Sigmoid colon (tissue), 7 donors: ENCODE measurements at regions of chr1 and their contacts with region 1.

Region 1: GRCh38 chr1:53945433-53946251 is at the start of gene IFT25:
- DNase-seq: peak; percentile 98
- H3K4me3 ChIP-seq: peak within 1 kb of the TSS; percentile 68 to 93 (median 82)
- H3K27ac ChIP-seq: peak within 1 kb of the TSS; percentile 92 to 96 (median 94)
- H3K4me1 ChIP-seq: peaks cover 0 to 43% (median 33%) of the 10 kb centered on the region in 4 donors
- H3K27me3 ChIP-seq: no peaks in the 10 kb centered on the region
- CTCF ChIP-seq: no peak
- EP300 ChIP-seq: no peak
- POLR2A ChIP-seq: peak; percentile 38 to 57
- total RNA-seq, gene IFT25: 16.1 to 33.9 (median 24.9) TPM

Region 2: GRCh38 chr1:53837924-53838652 is 107.6 kb before region 1 on chr1 and contains the start of gene NDC1:
- intact Hi-C with region 1: loop called (anchors 5 kb)
- DNase-seq: peak; percentile 93
- H3K4me3 ChIP-seq: peak within 1 kb of the TSS; percentile 80 to 93 (median 88)
- H3K27ac ChIP-seq: peak within 1 kb of the TSS; percentile 91 to 96 (median 93)
- H3K4me1 ChIP-seq: peaks cover 0 to 18% (median 11%) of the 10 kb centered on the region in 4 donors
- H3K27me3 ChIP-seq: no peaks in the 10 kb centered on the region
- CTCF ChIP-seq: no peak
- EP300 ChIP-seq: peak in 1 of 4 donors; percentile 19
- POLR2A ChIP-seq: no peak
- total RNA-seq, gene NDC1: 7.6 to 11.4 (median 10.2) TPM

Region 3: GRCh38 chr1:53889304-53890298 is 56.0 kb before region 1 on chr1 and contains the start of gene YIPF1:
- intact Hi-C with region 1: loop called (anchors 2 kb)
- DNase-seq: peak; percentile 95
- H3K4me3 ChIP-seq: peak within 1 kb of the TSS; percentile 84 to 95 (median 90)
- H3K27ac ChIP-seq: peak within 1 kb of the TSS; percentile 79 to 89 (median 82)
- H3K4me1 ChIP-seq: peaks cover 0 to 21% (median 18%) of the 10 kb centered on the region in 4 donors
- H3K27me3 ChIP-seq: no peaks in the 10 kb centered on the region
- CTCF ChIP-seq: no peak
- EP300 ChIP-seq: peak in 1 of 4 donors; percentile 31
- POLR2A ChIP-seq: no peak
- total RNA-seq, gene YIPF1: 13.3 to 23.3 (median 18.8) TPM